Right lobe of liver (tissue), 6 donors: ENCODE measurements at regions of chr19 and their contacts with region 1.

Region 1: DNA sequence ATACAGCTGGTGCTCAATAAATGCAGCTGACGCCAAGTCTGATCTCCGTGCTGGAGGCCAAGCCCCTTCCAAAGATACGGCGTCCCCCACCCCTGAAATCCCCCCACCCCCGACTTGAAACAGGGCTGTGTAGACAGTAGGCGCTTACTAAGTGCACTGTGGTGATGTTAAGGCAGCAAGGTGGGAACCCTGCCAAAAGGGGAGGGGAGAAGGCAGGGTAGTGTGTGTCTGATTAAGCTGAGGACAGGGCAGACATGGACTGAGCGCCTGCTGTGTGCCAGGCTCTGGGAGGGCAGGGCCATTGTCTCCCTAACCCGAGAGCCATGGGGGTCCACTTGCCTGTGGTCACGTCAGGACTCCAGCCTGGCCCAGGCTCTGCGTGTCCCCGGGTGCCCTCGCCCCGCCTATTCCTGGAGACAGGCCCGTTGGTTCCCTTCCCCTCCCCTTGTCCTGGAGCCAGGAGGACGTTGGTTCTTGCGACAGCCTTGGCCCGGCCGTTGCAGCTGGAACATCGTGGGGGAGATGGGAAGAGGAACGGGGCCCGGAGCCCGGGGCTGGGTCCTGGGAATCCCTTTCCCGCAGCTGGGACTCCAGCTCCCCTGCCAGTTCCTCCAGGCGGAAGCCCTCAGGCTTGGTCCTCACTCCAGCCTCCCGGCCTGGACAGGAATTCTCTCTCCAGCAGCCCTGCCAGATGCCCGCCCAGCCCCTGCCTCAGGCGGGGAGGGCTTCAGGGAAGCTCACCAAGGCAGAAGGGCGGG is 1.7 kb upstream of the ELANE start:
- DNase-seq: peak; percentile 85 to 93 (median 91)
- ATAC-seq: peak; percentile 92 to 98 (median 96)
- H3K4me3 ChIP-seq: no peak overlapping the region
- H3K27ac ChIP-seq: no peak overlapping the region
- H3K4me1 ChIP-seq: peaks cover 0 to 8% (median 3%) of the 10 kb centered on the region in 4 donors
- H3K27me3 ChIP-seq: no peaks in the 10 kb centered on the region
- CTCF ChIP-seq: no peak
- POLR2A ChIP-seq: no peak

Region 2: GRCh38 chr19:970695-971094 is 120.3 kb after region 1 on chr19:
- intact Hi-C with region 1: loop called in 1 of 2 experiments (anchors 10 kb)
- DNase-seq: no peak
- ATAC-seq: no peak
- H3K4me3 ChIP-seq: no peak overlapping the region
- H3K27ac ChIP-seq: no peak overlapping the region
- H3K4me1 ChIP-seq: no peaks in the 10 kb centered on the region
- H3K27me3 ChIP-seq: no peaks in the 10 kb centered on the region
- CTCF ChIP-seq: peak; percentile 30 to 48 (median 44)
- POLR2A ChIP-seq: no peak

Region 3: DNA sequence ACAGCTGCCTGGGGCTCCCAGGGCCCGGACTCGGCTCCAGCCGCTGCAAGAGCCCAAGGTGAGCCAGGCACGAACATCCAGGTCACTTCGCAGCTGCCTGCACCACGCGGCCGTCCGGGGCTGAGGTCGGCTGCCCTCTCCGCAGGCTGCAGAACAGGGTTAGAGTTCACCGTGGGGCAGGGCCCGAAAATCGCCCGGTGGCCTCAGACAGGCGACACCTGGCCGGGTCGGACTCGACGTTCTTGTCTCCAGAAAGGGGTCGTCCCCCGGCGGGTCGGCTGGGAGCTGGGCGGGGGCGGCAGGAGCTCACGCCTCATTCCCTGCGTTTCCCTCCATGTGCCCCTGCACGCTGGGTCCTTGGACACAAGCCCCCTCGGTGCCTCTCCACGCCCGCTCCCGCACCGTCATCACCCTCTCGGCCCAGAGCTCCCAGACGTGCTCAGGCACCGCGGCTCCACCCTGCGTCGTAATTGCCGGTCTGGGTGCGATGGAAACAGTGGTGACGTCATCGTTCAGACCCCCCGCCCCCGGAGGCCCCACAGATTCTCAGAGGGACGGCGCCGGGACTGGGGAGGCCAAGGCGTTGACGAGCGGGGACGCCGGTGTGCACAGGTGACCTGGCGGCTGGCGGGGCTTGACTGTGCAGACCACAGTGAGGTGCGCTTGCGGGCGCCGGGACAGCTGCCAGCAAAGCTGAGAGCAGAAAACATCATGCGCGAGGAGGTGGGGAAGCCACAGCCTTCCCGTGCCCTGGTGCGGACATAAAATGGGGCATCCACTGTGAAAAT is 145.8 kb after region 1 on chr19:
- intact Hi-C with region 1: loop called in 1 of 2 experiments (anchors 10 kb)
- DNase-seq: peak in 1 of 3 donors; percentile 27
- ATAC-seq: peak in 2 of 4 donors; percentile 5 to 18
- H3K4me3 ChIP-seq: no peak overlapping the region
- H3K27ac ChIP-seq: peak overlapping the region in 1 of 3 donors; percentile 91
- H3K4me1 ChIP-seq: peaks cover 0 to 44% (median 7%) of the 10 kb centered on the region in 4 donors
- H3K27me3 ChIP-seq: peaks cover 0 to 16% of the 10 kb centered on the region in 2 donors
- CTCF ChIP-seq: no peak
- POLR2A ChIP-seq: no peak